ENCODE measurements at regions of chr12 and their contacts with region 1.

Region 1: DNA sequence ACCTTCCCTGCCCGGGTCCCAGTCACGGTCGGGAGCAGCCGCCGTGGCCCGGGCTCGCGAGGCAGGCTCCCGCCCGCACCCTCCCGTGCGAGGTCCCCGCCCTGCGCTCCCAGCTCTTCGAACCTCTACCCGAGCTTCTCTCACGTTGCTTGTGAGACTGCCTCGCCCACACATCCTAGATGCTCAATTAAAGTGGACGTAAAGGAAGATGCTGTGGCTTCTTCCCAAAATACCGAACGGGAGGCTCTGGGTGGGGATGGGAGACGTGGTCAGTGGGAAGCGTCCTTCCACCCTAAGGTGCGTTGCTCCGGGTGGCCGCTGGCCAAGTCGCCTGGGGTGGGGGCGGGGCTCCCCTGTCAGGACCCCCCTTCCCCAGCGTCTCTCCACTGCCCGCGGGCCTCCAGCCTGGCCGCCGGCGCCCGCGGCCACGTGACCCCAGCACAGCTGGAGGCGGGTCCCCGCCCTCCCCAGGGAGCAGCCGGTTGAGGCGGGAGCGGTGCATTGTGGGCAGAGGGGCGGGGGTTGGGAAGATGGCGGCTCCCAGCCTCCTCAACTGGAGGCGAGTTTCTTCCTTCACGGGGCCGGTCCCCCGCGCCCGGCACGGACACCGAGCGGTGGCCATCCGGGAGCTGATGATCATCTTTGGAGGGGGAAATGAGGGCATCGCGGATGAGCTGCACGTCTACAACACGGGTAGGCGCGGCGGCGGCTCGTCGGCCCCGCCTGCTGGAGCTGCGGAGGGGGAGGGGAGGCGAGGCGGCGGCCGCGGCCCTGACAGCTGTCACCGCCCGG is at the start of gene HCFC2:
- DNase-seq: peak; percentile 97
- H3K4me3 Mint-ChIP-seq: peak within 1 kb of the TSS; percentile 98
- H3K27ac Mint-ChIP-seq: peak within 1 kb of the TSS; percentile 91
- H3K4me1 Mint-ChIP-seq: peaks cover 20% of the 10 kb centered on the region
- H3K27me3 Mint-ChIP-seq: peaks cover 30% of the 10 kb centered on the region
- total RNA-seq, gene HCFC2: 8.2 and 8.6 TPM in 2 replicates

Region 2: DNA sequence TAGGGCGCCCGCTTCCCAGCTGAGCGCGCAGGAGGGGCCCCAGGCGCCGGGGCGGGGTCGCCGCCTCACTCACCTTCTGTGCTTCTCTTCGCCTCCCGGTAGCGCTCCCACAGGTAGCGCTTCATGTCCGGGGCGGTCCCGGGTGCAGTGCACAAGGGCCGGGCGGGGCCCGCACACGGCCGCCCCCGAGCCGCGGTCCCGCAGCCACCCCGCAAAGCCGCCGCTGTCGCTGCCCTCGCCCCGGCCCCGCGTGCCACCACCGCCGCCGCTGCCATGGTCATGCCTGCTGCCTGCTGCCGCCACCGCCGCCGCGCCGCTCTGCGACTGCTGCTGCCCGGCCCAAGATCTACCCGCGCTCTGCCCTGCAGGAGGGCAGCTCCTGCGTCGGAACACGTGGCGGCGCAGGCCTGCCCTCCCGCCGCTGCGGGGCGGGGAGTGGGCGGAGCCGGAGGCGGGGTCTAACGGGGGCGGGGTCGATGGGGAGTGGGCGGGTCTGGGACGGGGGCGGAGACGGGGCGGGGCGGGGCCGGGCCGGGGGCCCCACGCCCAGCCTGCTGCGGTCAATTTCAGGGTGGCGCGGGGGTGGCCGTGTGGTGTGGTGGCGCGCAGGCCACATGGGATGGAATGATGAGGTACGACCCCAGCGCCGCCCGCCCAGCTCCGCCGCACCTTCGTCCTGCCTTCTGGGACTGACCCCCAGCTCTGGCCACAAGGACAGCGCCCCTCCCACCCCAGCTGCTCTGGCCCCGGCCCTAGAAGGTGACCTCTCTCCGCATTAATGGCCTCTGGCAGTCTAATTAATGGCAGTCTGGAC is 223.1 kb before region 1 on chr12 and contains the start of gene NT5DC3:
- intact Hi-C with region 1: loop called (anchors 1 kb)
- DNase-seq: peak; percentile 93
- H3K4me3 Mint-ChIP-seq: peak within 1 kb of the TSS; percentile 85
- H3K27ac Mint-ChIP-seq: peak within 1 kb of the TSS; percentile 86
- H3K4me1 Mint-ChIP-seq: peaks cover 13% of the 10 kb centered on the region
- H3K27me3 Mint-ChIP-seq: peaks cover 33% of the 10 kb centered on the region
- total RNA-seq, gene NT5DC3: 12.3 and 14.9 TPM in 2 replicates

Region 3: GRCh38 chr12:103877934-103878510 is 186.2 kb before region 1 on chr12:
- intact Hi-C with region 1: loop called (anchors 5 kb)
- DNase-seq: peak; percentile 88
- H3K4me3 Mint-ChIP-seq: no peak overlapping the region
- H3K27ac Mint-ChIP-seq: no peak overlapping the region
- H3K4me1 Mint-ChIP-seq: peaks cover 29% of the 10 kb centered on the region
- H3K27me3 Mint-ChIP-seq: peaks cover 12% of the 10 kb centered on the region

Region 4: GRCh38 chr12:104083769-104084475 is 19.7 kb after region 1 on chr12:
- intact Hi-C with region 1: loop called (anchors 1 kb)
- DNase-seq: peak; percentile 52
- H3K4me3 Mint-ChIP-seq: peak overlapping the region; percentile 34
- H3K27ac Mint-ChIP-seq: peak overlapping the region; percentile 47
- H3K4me1 Mint-ChIP-seq: peaks cover 10% of the 10 kb centered on the region
- H3K27me3 Mint-ChIP-seq: no peaks in the 10 kb centered on the region

Region 5: DNA sequence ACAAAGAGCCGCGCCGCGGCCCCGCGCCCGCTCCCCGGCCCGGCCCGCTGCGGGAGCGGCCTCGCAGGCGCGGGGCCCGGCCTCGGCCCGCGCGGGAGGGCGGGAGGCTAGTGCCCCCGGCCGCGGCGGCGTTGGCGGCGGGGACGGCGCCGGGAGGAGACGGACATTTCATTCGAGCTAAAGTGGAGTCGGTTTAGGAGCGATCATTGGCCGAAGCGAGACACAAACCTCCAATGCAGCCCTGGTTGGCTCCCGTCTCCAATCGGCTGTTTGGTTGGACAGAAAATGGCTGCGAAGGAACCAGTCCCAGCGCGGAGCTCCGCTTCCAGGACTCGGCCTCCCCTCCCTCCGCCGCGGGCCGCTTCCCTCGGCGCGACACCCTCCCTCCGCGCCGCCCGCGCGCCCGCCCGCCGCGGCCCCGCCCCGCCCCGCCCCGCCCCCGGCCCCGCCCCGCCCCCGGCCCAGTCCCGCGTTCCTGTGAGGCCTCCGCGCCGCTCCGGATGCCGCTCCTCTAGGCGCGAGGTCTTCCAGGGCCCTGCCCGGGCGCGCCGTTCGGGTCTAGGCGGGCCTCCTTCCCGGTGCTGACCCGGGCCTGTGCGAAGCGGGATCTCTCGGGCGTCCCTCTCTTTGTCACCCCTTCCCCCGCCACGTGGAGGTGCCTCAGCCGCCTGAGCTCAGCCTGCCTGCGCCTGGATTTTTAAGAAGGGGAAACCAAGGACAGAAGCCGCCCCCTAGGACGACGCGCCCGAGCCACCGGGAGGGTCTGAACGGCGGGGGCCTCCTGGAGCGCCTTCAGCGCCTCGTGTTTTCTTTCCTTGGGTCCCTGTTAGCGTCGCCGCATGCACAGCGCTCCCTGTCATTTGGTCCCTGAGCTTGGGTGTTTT is 73.9 kb after region 1 on chr12 and contains the start of gene NFYB:
- intact Hi-C with region 1: loop called (anchors 1 kb)
- DNase-seq: peak; percentile 98
- H3K4me3 Mint-ChIP-seq: peak within 1 kb of the TSS; percentile 87
- H3K27ac Mint-ChIP-seq: peak within 1 kb of the TSS; percentile 91
- H3K4me1 Mint-ChIP-seq: peaks cover 16% of the 10 kb centered on the region
- H3K27me3 Mint-ChIP-seq: peaks cover 17% of the 10 kb centered on the region
- total RNA-seq, gene NFYB: 25.4 and 28.6 TPM in 2 replicates

Measured in activated CD4-positive, alpha-beta T cell treated with anti-CD3 and anti-CD28 coated beads, Interleukin-2, amount 10 ng/mL, durations not matched to agents 24 days and 14 days (primary cell).